ENCODE measurements at regions of chr11 and their contacts with region 1.

Region 1: DNA sequence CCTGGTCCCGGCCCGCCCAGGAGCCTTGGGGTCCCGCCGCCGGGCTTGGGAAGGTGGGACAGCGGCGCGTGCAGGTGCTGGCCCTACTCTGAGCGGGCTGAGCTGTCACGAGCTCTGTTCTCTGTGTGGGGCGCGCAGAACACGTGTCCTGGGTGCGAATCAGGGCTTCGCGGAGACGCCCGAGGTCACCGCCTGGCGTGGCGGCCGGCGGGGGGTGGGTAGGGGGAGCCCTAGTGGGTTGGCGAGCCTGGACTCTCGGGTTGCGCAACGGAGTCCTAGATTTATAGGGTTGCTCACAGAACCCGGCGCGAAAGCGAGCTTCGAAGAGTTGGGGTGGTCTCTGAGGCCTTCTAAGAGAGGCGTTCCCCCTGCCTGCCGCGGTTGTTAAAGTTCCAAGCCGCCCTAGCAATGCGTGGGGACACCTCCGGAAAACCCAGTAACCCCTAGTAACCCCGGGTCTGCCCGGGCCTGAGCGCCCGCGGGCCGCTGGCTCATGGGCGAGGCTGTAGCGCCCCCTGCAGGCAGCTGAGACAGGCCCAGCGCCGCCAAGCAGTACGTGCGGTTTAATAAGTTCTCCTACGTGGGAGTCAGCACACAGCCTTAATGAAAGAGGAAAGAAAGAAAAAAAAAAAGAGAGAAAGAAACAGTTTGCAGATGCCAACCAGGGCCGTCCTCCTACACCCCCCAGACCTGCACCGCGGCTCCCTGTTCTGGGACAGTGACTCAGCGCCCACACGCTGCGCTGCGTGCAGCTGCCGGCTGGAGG is 2.8 kb downstream of the ADM start:
- DNase-seq: peak; percentile 92
- H3K4me3 ChIP-seq: peak overlapping the region; percentile 62 to 80 (median 72)
- H3K27ac ChIP-seq: peak overlapping the region; percentile 54
- H3K4me1 ChIP-seq: peaks cover 45% of the 10 kb centered on the region
- H3K27me3 ChIP-seq: no peaks in the 10 kb centered on the region
- CTCF ChIP-seq: peak; percentile 87 to 92

Region 2: DNA sequence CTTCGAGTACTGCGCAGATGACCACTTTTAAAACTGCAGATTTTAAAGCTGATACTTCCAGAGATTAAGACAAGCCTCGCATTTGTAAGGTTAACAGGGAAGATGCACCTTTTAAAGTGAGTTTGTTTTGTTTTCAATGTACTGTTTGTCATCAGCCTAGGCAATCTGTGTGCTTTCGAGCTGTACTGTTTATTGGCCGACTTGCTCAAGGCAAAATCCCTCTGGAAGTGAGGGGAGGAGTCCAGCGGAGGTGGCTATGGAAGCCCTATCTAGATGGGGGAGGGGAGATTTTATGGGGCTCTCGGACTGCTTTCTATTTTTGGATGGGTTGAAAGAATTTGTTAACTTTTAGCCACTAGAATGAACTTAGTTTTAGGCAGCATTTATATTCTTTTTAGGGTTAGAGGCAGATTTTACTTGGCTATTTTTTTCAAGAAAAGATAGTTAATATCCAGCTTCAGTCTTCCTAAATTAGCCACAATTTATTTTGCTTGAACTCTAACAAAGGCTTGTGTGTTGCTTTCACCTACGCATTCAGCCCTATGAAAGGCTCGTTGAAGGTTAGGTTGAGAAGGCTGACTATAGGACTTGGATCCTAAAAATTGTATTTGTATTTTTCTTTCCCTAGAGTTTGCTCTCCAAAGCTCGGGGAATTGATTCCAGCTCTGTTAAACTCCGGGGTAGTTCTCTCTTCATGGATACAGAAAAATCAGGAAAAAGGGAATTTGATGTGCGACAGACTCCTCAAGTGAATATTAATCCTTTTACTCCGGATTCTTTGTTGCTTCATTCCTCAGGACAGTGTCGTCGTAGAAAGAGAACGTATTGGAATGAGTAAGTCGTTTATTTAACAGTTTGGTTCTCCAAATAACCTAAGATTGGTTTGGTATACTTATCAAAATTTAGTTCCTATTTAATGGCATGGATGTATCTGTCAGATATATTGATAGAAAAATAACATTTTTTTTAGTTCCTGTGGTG is 732.1 kb before region 1 on chr11:
- CTCF ChIA-PET with region 1: interaction called, 3 read pairs
- dilution Hi-C with region 1: no loop called
- in situ Hi-C with region 1: no loop called
- intact Hi-C with region 1: loop called (anchors 1 kb)
- DNase-seq: peak; percentile 86
- H3K4me3 ChIP-seq: peak overlapping the region; percentile 87 to 97 (median 89)
- H3K27ac ChIP-seq: peak overlapping the region; percentile 96
- H3K4me1 ChIP-seq: peaks cover 17% of the 10 kb centered on the region
- H3K27me3 ChIP-seq: no peaks in the 10 kb centered on the region
- CTCF ChIP-seq: no peak

Region 3: GRCh38 chr11:9748361-9748970 is 559.2 kb before region 1 on chr11:
- CTCF ChIA-PET with region 1: no interaction called
- dilution Hi-C with region 1: loop called (anchors 5 kb)
- in situ Hi-C with region 1: loop called in 1 of 2 experiments (anchors 25 kb)
- intact Hi-C with region 1: no loop called
- DNase-seq: peak; percentile 68
- H3K4me3 ChIP-seq: no peak overlapping the region
- H3K27ac ChIP-seq: peak overlapping the region; percentile 18
- H3K4me1 ChIP-seq: peaks cover 18% of the 10 kb centered on the region
- H3K27me3 ChIP-seq: no peaks in the 10 kb centered on the region
- CTCF ChIP-seq: peak; percentile 72 to 74

Region 4: DNA sequence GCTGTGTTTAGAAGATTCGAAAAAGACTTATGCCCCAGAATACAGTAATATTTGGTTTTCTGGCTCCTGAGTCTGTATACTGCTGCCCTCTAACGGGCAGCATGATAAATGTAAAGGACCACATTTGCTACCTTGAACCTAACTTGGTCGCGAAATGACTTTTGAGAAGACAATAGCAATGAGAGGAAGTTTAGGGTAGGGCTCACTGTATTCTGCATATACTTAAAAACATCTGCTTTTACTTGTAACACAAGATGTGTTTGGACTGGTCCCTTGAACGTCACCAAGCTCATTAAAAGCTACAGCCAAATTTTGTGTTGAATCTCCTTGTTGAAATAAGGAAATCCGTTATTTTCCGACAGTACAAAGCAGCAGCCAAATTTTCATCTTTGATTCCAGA is 334.6 kb before region 1 on chr11:
- CTCF ChIA-PET with region 1: no interaction called
- dilution Hi-C with region 1: no loop called
- in situ Hi-C with region 1: loop called in 1 of 2 experiments (anchors 25 kb)
- intact Hi-C with region 1: loop called (anchors 2 kb)
- DNase-seq: peak; percentile 39
- H3K4me3 ChIP-seq: no peak overlapping the region
- H3K27ac ChIP-seq: no peak overlapping the region
- H3K4me1 ChIP-seq: no peaks in the 10 kb centered on the region
- H3K27me3 ChIP-seq: no peaks in the 10 kb centered on the region
- CTCF ChIP-seq: peak; percentile 75 to 83

Region 5: DNA sequence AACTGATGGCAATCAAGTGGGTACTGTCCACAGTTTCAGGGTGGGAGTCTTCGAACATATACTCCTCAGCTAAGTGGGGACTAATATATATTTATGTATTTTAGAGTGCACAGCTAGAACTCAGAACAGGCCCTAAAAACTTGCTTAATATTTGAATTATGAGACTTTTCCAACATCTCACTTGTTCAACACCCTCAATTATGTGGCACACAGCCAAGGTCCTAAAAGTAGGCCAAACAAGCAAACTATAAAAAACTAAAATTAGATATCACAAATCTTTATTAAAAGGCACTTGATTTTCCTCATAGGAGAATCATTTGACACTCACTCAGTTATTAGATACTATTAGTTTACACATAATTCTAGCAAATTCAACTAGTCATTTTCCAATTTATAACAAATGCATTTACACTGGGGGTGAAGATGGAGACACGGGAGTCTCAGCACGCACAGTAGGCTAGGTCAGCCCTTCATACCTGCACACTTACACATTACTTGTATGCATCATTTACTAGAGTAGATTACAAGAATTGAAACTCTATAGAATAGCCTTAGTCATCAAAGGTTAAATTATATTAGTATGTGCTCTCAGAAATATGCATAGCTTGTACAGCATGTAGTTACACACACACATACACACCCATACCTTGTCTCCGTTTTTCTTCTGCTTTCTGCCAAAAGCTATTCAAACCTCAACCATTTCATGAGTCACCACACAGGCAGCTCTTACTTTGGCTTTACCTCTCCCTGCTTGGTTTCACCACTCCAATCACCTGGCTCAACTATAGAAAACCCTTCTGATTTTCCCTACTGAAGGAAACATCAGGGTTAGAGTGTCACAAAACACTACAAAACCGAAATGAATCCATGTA is 185.1 kb before region 1 on chr11:
- CTCF ChIA-PET with region 1: interaction called, 3 read pairs
- dilution Hi-C with region 1: no loop called
- in situ Hi-C with region 1: no loop called
- intact Hi-C with region 1: loop called (anchors 2 kb)
- DNase-seq: peak; percentile 97
- H3K4me3 ChIP-seq: no peak overlapping the region
- H3K27ac ChIP-seq: peak overlapping the region; percentile 98
- H3K4me1 ChIP-seq: peaks cover 7% of the 10 kb centered on the region
- H3K27me3 ChIP-seq: no peaks in the 10 kb centered on the region
- CTCF ChIP-seq: no peak

Region 6: DNA sequence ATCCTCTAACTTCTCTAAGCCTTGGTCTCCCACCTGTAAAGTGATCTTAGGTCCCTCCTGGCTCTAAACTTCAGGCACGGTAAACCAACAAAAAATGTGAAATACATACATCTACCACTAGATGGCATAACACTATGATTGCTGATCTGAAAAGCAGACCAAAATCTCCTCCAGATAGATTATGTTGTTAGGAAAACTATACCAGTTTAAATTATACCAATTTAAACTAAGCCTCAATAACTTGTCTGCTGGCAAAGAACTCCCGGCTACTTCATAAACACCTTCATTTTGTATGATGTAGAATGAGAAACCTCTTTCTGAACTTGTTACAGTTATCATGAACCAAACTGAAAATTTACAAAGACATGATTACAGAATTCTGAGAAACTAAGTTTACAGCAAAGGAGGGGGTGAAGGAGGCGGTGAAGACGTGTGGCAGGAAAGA is 99.5 kb before region 1 on chr11:
- CTCF ChIA-PET with region 1: interaction called, 5 read pairs
- dilution Hi-C with region 1: no loop called
- in situ Hi-C with region 1: loop called in 1 of 2 experiments (anchors 10 kb)
- intact Hi-C with region 1: loop called (anchors 1 kb)
- DNase-seq: peak; percentile 44
- H3K4me3 ChIP-seq: no peak overlapping the region
- H3K27ac ChIP-seq: no peak overlapping the region
- H3K4me1 ChIP-seq: no peaks in the 10 kb centered on the region
- H3K27me3 ChIP-seq: no peaks in the 10 kb centered on the region
- CTCF ChIP-seq: peak; percentile 62 to 65

Region 7: GRCh38 chr11:10255388-10256125 is 52.1 kb before region 1 on chr11:
- CTCF ChIA-PET with region 1: no interaction called
- dilution Hi-C with region 1: no loop called
- in situ Hi-C with region 1: no loop called
- intact Hi-C with region 1: no loop called
- DNase-seq: no peak
- H3K4me3 ChIP-seq: no peak overlapping the region
- H3K27ac ChIP-seq: no peak overlapping the region
- H3K4me1 ChIP-seq: no peaks in the 10 kb centered on the region
- H3K27me3 ChIP-seq: no peaks in the 10 kb centered on the region
- CTCF ChIP-seq: no peak

Region 8: DNA sequence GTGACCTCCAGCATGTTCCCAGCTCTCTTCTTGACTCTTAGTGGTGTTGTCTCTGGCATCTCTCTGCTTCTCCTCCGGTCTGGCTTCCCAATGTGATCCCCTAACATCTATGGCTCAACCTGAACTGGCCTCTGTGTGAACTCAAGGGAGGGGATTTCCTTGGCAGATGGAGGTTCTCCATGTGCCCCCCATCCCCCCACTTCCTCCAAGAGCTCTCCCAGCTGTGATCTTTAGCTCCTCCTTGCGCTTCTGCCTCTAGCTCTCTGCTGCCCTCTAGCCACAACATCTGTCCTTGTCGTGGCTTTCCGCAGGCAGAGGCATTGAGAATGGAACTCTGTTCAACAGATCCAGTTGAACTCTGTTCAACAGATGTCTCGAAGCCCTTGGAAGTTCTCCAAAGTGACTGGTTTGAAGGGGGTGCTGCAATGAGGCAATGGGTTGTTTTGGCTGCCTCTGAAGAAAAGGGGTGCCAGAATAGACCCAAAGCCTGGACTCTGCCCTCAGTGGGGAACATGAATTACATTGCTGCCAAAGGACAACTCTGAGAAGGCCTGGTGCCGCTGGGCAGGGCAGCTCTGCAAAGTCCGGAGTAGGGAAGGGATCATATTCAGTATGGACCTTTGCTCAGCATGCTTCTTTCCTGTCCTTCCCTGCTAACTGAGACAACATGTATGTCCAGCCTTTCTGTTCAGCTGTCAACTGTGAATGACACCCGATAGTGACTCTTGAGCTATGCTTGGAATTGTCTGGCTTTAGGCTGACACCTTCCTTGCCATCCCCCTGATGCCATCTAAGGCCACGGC is 59.1 kb after region 1 on chr11:
- CTCF ChIA-PET with region 1: interaction called, 14 read pairs
- dilution Hi-C with region 1: no loop called
- in situ Hi-C with region 1: no loop called
- intact Hi-C with region 1: loop called (anchors 1 kb)
- DNase-seq: peak; percentile 93
- H3K4me3 ChIP-seq: no peak overlapping the region
- H3K27ac ChIP-seq: peak overlapping the region; percentile 5
- H3K4me1 ChIP-seq: peaks cover 6% of the 10 kb centered on the region
- H3K27me3 ChIP-seq: no peaks in the 10 kb centered on the region
- CTCF ChIP-seq: peak; percentile 97

Region 9: GRCh38 chr11:10564696-10565318 is 257.2 kb after region 1 on chr11:
- CTCF ChIA-PET with region 1: no interaction called
- dilution Hi-C with region 1: no loop called
- in situ Hi-C with region 1: no loop called
- intact Hi-C with region 1: no loop called
- DNase-seq: no peak
- H3K4me3 ChIP-seq: no peak overlapping the region
- H3K27ac ChIP-seq: no peak overlapping the region
- H3K4me1 ChIP-seq: no peaks in the 10 kb centered on the region
- H3K27me3 ChIP-seq: no peaks in the 10 kb centered on the region
- CTCF ChIP-seq: peak; percentile 31 to 58